ENCODE measurements at regions of chr16 and their contacts with region 1.

Region 1: DNA sequence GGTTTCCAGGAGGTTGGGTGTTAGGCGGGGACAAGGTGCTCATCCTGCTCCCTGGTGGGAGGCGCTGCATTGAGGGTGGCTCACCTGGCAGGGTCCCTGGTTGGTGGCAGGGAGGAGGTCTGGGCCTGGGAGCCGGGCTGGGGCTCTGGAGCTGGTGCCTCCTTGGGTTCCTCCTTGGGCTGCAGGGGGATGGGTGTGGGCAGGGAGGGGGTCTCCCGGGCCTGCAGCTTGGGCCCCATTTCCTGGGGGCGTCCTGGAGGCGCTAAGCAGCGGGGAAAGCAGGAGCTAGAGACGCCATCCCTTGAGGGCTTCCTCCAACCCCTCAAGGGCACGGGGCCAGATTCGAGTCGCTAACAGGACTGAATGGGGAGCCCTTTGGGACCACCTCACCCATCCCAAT is 11.1 kb downstream of the CNGB1 start:
- DNase-seq: no peak
- ATAC-seq: no peak
- H3K4me3 ChIP-seq: no peak overlapping the region
- H3K27ac ChIP-seq: no peak overlapping the region
- H3K4me1 ChIP-seq: no peaks in the 10 kb centered on the region
- H3K27me3 ChIP-seq: peaks cover 57% of the 10 kb centered on the region
- CTCF ChIP-seq: no peak
- POLR2A ChIP-seq: no peak
- RAD21 ChIP-seq: no peak

Region 2: GRCh38 chr16:58658796-58659211 is 699.0 kb after region 1 on chr16:
- CTCF ChIA-PET with region 1: no interaction called
- POLR2A ChIA-PET with region 1: no interaction called
- dilution Hi-C with region 1: no loop called
- in situ Hi-C with region 1: no loop called
- intact Hi-C with region 1: no loop called
- DNase-seq: peak; percentile 57
- ATAC-seq: no peak
- H3K4me3 ChIP-seq: no peak overlapping the region
- H3K27ac ChIP-seq: no peak overlapping the region
- H3K4me1 ChIP-seq: no peaks in the 10 kb centered on the region
- H3K27me3 ChIP-seq: peaks cover 2% of the 10 kb centered on the region; the same call in 1 of the 2 replicates
- CTCF ChIP-seq: no peak
- POLR2A ChIP-seq: no peak
- RAD21 ChIP-seq: no peak

Region 3: GRCh38 chr16:58670177-58670576 is 710.4 kb after region 1 on chr16:
- CTCF ChIA-PET with region 1: no interaction called
- POLR2A ChIA-PET with region 1: interaction called, 19 read pairs
- dilution Hi-C with region 1: no loop called
- in situ Hi-C with region 1: no loop called
- intact Hi-C with region 1: no loop called
- DNase-seq: peak; percentile 35
- ATAC-seq: peak; percentile 65
- H3K4me3 ChIP-seq: no peak overlapping the region
- H3K27ac ChIP-seq: no peak overlapping the region
- H3K4me1 ChIP-seq: peaks cover 4% of the 10 kb centered on the region
- H3K27me3 ChIP-seq: no peaks in the 10 kb centered on the region
- CTCF ChIP-seq: no peak
- POLR2A ChIP-seq: no peak
- RAD21 ChIP-seq: no peak

Measured in IMR-90 (cell line).